ENCODE measurements at regions of chr4 and their contacts with region 1.

Region 1: GRCh38 chr4:111854494-111855087 is 290.7 kb upstream of the FAM241A start:
- H3K4me3 ChIP-seq: no peak overlapping the region
- H3K27ac ChIP-seq: no peak overlapping the region
- H3K4me1 ChIP-seq: no peaks in the 10 kb centered on the region
- CTCF ChIP-seq: 0 out of 2 replicates have a peak, but pooled peaks have one; percentile 32

Region 2: GRCh38 chr4:111633347-111634266 is 221.0 kb before region 1 on chr4:
- CTCF ChIA-PET with region 1: interaction called, 11 read pairs
- POLR2A ChIA-PET with region 1: no interaction called
- H3K4me3 ChIP-seq: no peak overlapping the region
- H3K27ac ChIP-seq: no peak overlapping the region
- H3K4me1 ChIP-seq: no peaks in the 10 kb centered on the region
- CTCF ChIP-seq: no peak

Region 3: DNA sequence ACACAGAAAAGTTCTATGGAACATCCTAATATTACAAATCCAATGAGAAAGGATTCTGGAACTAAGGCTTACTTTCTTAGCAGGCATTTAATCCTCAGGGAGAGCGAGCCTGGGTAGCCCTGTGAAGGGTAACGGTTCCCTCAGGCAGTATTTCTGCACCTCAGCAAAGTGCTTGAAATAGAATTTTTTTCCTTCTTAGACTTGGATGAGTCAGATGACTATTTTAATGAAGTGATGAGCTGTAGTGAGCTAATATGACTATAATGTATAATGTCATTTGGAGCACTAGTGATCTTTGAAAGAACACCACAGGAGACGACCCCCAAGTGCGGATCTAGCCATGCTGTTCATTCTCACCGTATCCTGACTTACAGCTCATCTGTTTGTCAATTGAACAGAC is 202.4 kb before region 1 on chr4:
- CTCF ChIA-PET with region 1: interaction called, 12 read pairs
- POLR2A ChIA-PET with region 1: no interaction called
- H3K4me3 ChIP-seq: no peak overlapping the region
- H3K27ac ChIP-seq: no peak overlapping the region
- H3K4me1 ChIP-seq: no peaks in the 10 kb centered on the region
- CTCF ChIP-seq: no peak

Region 4: DNA sequence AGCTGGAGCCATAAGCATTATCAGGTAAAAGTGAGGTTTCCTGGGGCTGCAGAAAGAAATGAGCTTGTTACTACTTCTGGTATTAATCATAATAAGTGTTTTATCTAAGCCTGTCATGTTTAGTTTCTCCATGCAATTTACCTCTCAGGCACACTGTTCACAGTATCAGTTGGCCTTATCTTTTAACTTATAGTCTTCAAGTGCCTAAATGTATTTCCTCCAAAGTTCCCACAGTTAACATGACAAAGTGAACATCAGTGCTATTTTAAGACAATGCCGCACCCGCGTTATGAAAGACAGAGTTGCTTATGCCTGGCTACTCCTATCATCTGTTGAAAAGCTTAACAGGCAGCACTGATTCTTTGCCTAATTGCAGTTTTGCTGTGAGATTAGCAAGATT is 118.1 kb before region 1 on chr4:
- CTCF ChIA-PET with region 1: no interaction called
- POLR2A ChIA-PET with region 1: no interaction called
- H3K4me3 ChIP-seq: no peak overlapping the region
- H3K27ac ChIP-seq: no peak overlapping the region
- H3K4me1 ChIP-seq: no peaks in the 10 kb centered on the region
- CTCF ChIP-seq: no peak

Region 5: DNA sequence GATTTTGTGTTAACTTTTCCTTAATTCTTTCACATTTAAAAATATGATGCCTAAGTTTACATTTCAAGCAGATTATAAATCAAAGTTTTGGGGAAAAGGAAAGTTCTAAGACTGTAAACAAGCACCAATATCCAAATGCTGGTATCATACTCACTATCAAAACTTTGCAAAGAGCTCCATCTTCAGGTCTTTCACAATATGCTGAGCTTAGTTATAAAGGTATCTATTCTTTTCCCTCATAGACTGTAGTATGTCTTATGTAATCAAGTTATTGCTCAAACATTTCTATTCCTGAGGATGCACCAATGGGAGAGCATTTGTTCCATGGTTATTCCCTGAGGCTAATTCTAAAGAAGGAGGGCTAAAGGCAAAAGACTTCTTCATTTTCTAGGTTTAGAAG is 82.8 kb after region 1 on chr4:
- CTCF ChIA-PET with region 1: interaction called, 22 read pairs
- POLR2A ChIA-PET with region 1: interaction called, 4 read pairs
- H3K4me3 ChIP-seq: no peak overlapping the region
- H3K27ac ChIP-seq: no peak overlapping the region
- H3K4me1 ChIP-seq: no peaks in the 10 kb centered on the region
- CTCF ChIP-seq: no peak

Region 6: GRCh38 chr4:112060212-112060611 is 205.6 kb after region 1 on chr4:
- CTCF ChIA-PET with region 1: interaction called, 11 read pairs
- POLR2A ChIA-PET with region 1: no interaction called
- H3K4me3 ChIP-seq: no peak overlapping the region
- H3K27ac ChIP-seq: no peak overlapping the region
- H3K4me1 ChIP-seq: no peaks in the 10 kb centered on the region
- CTCF ChIP-seq: no peak